Pancreas (tissue), 10 donors: ENCODE measurements at regions of chr2 and their contacts with region 1.

Region 1: DNA sequence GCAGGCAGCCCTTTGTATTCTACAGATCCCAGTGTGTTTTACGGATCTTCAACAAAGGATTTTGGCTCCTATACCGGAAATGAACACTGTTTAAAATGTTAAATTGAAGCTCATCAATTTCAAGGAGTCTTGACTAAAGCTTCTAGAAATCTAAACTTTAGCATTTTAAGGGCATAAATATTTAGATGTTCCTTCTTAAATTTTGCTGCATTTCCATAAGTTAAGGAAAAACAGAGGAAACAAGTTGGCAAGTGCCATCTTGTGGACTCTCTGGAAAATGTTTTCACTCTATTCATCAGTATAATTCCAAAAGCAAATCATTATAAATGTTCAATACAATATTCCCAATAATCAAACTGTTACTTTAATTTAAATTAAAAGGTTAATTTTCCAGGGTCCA is 19.6 kb downstream of the CHN1 start:
- DNase-seq: no peak
- ATAC-seq: no peak
- H3K4me3 ChIP-seq: no peak overlapping the region
- H3K27ac ChIP-seq: no peak overlapping the region
- H3K4me1 ChIP-seq: no peaks in the 10 kb centered on the region
- H3K27me3 ChIP-seq: no peaks in the 10 kb centered on the region
- CTCF ChIP-seq: peak in 2 of 4 donors; percentile 20 to 26

Region 2: DNA sequence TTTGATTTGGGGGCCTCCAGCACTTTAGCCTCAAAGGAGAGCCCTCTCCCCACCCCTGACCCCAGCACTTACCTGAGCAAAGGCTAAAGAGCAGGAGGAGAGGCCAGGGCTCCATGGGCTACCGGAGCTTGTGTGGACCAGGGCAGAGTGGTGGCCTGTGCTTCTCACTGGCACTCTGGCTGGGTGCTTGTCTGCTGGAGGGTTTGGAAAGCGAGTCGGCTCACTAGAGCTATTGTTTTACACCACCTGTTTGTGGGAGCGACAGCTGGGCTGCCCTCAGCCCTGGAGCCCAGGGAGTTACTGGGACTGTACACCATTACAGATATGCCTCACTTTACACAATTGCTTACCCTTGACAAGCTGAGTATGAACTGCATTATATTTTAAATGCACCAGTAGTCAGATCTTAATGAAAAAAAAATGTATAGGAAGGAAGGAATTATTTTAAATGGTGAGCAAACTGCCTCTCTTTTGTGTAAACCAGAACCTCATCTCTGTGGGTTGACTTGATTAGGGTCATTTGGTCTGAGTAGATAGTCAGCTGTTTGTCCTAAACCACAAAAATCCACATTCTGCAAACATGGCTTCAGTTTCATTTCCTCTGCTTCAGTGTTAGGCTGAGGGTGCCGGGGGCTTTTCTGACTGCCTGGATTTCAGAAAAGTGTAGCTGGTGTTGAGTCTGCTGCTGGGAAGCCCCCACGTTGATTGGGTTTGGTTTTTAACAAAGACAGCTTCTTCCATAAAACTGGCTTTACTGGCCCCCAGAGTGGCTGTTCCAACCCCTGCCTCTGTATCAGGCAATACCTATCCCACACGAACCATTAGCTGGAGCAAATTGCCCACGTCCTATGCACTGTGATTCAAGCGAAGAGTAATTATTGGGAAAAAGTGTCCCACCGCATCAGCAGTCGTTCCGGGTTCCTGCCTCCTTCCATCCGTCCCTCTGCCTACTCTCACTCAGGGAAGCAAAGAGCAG is 221.1 kb before region 1 on chr2 and contains the start of gene CHRNA1:
- intact Hi-C with region 1: loop called in 1 of 3 experiments (anchors 5 kb)
- DNase-seq: no peak
- ATAC-seq: peak in 2 of 4 donors; percentile 16 to 57
- H3K4me3 ChIP-seq: no peak within 1 kb of the TSS
- H3K27ac ChIP-seq: no peak within 1 kb of the TSS
- H3K4me1 ChIP-seq: no peaks in the 10 kb centered on the region
- H3K27me3 ChIP-seq: no peaks in the 10 kb centered on the region
- CTCF ChIP-seq: no peak
- total RNA-seq, gene CHRNA1: 0.12 to 0.14 TPM in 2 of 6 donors, not detected in the others

Region 3: GRCh38 chr2:174771631-174772471 is 213.8 kb before region 1 on chr2:
- intact Hi-C with region 1: loop called in 2 of 3 experiments (anchors 5 kb)
- DNase-seq: peak; percentile 30 to 81 (median 64)
- ATAC-seq: peak; percentile 70 to 99 (median 98)
- H3K4me3 ChIP-seq: no peak overlapping the region
- H3K27ac ChIP-seq: no peak overlapping the region
- H3K4me1 ChIP-seq: no peaks in the 10 kb centered on the region
- H3K27me3 ChIP-seq: no peaks in the 10 kb centered on the region
- CTCF ChIP-seq: peak; percentile 46 to 68 (median 63)

Region 4: DNA sequence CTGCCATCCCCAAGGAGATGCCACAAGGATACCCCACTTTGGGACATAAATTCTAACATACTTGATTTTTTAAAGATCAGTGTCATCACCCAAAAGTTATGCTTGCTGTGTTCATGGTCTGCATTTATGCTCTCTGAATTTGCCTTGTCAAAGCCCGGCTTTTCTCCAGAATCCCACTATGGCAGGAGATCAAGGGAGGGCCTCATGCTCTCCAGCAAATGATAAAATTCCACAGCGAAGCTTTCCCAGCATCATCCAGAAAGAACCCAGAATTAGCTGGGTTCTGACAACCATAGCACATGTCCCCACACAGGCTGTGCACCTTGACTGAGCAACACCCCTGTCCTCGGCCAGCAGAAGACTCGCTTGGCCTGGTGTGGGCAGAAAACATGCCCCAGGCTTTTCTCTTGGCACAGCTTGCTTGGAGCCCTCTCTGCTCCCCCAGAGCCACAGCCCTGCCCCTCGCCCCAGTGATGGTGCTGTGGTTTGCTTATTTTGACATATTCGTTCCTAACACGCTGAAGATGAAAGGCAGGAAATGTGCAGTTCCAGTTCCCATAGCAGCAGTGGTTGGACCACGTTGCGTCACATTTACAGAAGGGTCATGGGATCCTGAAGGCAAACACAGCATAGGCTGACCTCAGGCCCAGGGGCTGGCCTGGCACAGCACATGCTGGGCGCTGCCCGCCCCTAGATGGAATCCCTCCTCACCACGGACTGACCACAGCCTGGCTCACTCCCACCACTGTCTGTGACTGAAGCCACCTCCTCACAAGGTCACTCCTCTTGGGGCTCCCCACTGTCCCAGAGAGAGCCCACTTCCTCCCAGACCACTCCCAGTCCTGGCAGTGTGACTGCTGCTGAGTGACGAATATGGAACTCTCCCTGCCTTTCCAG is 207.3 kb before region 1 on chr2:
- intact Hi-C with region 1: loop called in 2 of 3 experiments (anchors 5 kb)
- DNase-seq: peak in 2 of 6 donors; percentile 3 to 26
- ATAC-seq: peak in 3 of 4 donors; percentile 70 to 83 (median 78)
- H3K4me3 ChIP-seq: no peak overlapping the region
- H3K27ac ChIP-seq: peak overlapping the region in 1 of 4 donors; percentile 41
- H3K4me1 ChIP-seq: no peaks in the 10 kb centered on the region
- H3K27me3 ChIP-seq: no peaks in the 10 kb centered on the region
- CTCF ChIP-seq: no peak